CD4-positive, alpha-beta T cell (primary cell): ENCODE measurements at regions of chr12 and their contacts with region 1.

Region 1: GRCh38 chr12:68521321-68521839 is 89.3 kb upstream of the RAP1B start:
- DNase-seq: no peak
- ATAC-seq: no peak
- H3K4me3 ChIP-seq: no peak overlapping the region
- H3K4me3 Mint-ChIP-seq: no peak overlapping the region
- H3K27ac ChIP-seq: no peak overlapping the region
- H3K27ac Mint-ChIP-seq: no peak overlapping the region
- H3K4me1 ChIP-seq: no peaks in the 10 kb centered on the region
- H3K4me1 Mint-ChIP-seq: peaks cover 4% of the 10 kb centered on the region
- H3K27me3 ChIP-seq: no peaks in the 10 kb centered on the region
- H3K27me3 Mint-ChIP-seq: no peaks in the 10 kb centered on the region
- CTCF ChIP-seq: no peak

Region 2: GRCh38 chr12:68462803-68463202 is 58.6 kb before region 1 on chr12:
- CTCF ChIA-PET with region 1: no interaction called
- POLR2A ChIA-PET with region 1: no interaction called
- intact Hi-C with region 1: no loop called
- DNase-seq: peak in 4 of 14 experiments; percentile 19 to 52 (median 42)
- ATAC-seq: peak; percentile 52
- H3K4me3 ChIP-seq: peak overlapping the region; percentile 55
- H3K4me3 Mint-ChIP-seq: peak overlapping the region; percentile 86
- H3K27ac ChIP-seq: peak overlapping the region in 1 of 2 donors; percentile 57
- H3K27ac Mint-ChIP-seq: peak overlapping the region; percentile 79
- H3K4me1 ChIP-seq: peaks cover 12% of the 10 kb centered on the region
- H3K4me1 Mint-ChIP-seq: peaks cover 20% of the 10 kb centered on the region
- H3K27me3 ChIP-seq: no peaks in the 10 kb centered on the region
- H3K27me3 Mint-ChIP-seq: no peaks in the 10 kb centered on the region
- CTCF ChIP-seq: no peak

Region 3: DNA sequence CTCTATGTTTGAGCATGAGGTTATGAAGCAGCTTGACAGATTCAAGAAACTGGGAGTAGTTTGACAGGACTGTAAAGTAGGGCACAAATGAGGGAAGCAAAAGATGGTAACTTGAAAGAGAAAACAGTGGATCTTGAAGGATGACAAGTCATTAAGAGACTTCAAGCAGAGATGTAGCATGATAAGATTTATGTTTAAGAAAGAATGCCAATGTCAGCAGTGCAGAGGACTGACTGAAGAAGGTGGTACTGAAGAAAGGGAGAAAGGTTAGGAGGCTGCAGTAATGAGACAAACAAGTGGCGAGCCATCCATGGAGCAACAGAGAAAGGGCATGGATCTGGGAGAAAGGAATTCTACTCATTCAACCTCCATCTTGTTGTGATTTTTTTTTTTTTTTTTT is 30.9 kb before region 1 on chr12:
- CTCF ChIA-PET with region 1: no interaction called
- POLR2A ChIA-PET with region 1: no interaction called
- intact Hi-C with region 1: loop called in 1 of 2 experiments (anchors 1 kb)
- DNase-seq: no peak
- ATAC-seq: no peak
- H3K4me3 ChIP-seq: no peak overlapping the region
- H3K4me3 Mint-ChIP-seq: no peak overlapping the region
- H3K27ac ChIP-seq: no peak overlapping the region
- H3K27ac Mint-ChIP-seq: no peak overlapping the region
- H3K4me1 ChIP-seq: no peaks in the 10 kb centered on the region
- H3K4me1 Mint-ChIP-seq: peaks cover 14% of the 10 kb centered on the region
- H3K27me3 ChIP-seq: no peaks in the 10 kb centered on the region
- H3K27me3 Mint-ChIP-seq: no peaks in the 10 kb centered on the region
- CTCF ChIP-seq: no peak